ENCODE measurements at regions of chr13 and their contacts with region 1.

Region 1: DNA sequence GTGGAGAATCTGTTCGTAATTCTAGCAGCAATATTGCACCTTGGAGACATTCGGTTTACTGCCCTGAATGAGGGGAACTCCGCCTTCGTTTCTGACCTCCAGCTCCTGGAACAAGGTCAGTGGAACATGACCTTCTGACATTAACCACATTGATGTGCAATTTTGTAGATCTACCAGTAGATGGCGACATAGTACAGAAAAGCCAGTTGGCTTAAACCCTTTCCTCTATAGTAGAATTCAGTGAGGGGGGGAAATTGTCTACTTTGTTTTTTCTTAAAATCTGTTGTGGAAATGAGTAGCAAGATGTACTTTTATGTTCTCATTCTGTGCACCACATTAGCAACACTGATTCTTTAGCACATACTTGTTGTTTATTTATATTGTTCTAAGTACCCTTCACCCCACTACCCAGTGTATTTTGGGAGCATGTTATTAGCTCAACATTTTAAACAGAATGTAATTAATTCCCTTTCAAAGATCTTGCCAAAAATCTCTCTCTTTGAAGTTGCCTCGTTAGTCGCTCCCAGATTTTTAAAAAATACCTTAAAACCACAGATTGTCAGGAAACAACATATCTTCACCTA is 332.2 kb downstream of the MYO16 start:
- DNase-seq: no peak
- H3K4me3 Mint-ChIP-seq: no peak overlapping the region
- H3K27ac Mint-ChIP-seq: no peak overlapping the region
- H3K4me1 Mint-ChIP-seq: peaks cover 8% of the 10 kb centered on the region
- H3K27me3 Mint-ChIP-seq: no peaks in the 10 kb centered on the region
- CTCF ChIP-seq: peak; percentile 18

Region 2: GRCh38 chr13:108993346-108993745 is 31.7 kb after region 1 on chr13:
- CTCF ChIA-PET with region 1: no interaction called
- intact Hi-C with region 1: no loop called
- DNase-seq: no peak
- H3K4me3 Mint-ChIP-seq: no peak overlapping the region
- H3K27ac Mint-ChIP-seq: no peak overlapping the region
- H3K4me1 Mint-ChIP-seq: no peaks in the 10 kb centered on the region
- H3K27me3 Mint-ChIP-seq: no peaks in the 10 kb centered on the region
- CTCF ChIP-seq: no peak

Region 3: GRCh38 chr13:109131698-109132257 is 170.1 kb after region 1 on chr13:
- CTCF ChIA-PET with region 1: no interaction called
- intact Hi-C with region 1: loop called (anchors 10 kb)
- DNase-seq: no peak
- H3K4me3 Mint-ChIP-seq: no peak overlapping the region
- H3K27ac Mint-ChIP-seq: no peak overlapping the region
- H3K4me1 Mint-ChIP-seq: no peaks in the 10 kb centered on the region
- H3K27me3 Mint-ChIP-seq: no peaks in the 10 kb centered on the region
- CTCF ChIP-seq: no peak

Region 4: DNA sequence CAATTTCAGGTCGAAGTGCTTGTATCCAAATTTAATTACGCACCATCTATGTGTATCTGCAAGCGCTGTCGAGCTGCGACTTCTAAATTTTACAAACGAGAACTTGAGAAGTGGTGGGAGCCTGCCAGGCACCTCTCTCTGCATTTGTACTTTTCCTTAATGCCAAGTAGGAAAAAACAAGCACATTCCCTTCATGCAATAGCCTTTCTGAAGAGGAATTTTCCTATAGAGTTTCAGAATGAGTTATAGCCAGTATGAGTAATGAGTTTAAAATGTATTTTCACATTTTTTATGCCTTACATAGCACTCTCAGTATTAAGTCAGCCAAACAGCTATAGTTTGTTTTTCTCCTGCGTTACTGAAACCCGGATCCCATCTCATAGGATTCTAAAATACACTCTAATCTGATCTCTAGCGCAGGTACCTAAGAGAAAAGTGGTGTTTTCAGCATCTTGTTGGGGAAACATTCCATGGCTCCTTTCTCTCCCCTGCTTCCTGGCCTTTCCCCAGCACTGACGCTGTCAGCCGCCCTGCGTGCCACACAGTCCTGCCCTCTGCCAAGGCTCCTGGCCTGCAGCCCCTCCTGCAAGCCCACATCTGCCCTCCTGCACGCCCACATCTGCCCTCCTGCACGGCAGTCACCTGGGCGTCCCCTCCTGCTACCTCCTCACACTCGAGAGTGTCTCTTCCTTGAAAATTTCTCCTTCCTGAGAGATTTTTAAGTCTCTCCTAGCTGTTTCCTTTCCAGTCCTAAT is 194.7 kb after region 1 on chr13:
- CTCF ChIA-PET with region 1: no interaction called
- intact Hi-C with region 1: no loop called
- DNase-seq: no peak
- H3K4me3 Mint-ChIP-seq: peak overlapping the region; percentile 57
- H3K27ac Mint-ChIP-seq: peak overlapping the region; percentile 91
- H3K4me1 Mint-ChIP-seq: peaks cover 40% of the 10 kb centered on the region
- H3K27me3 Mint-ChIP-seq: no peaks in the 10 kb centered on the region
- CTCF ChIP-seq: no peak

Region 5: GRCh38 chr13:109778102-109778542 is 816.5 kb after region 1 on chr13:
- CTCF ChIA-PET with region 1: no interaction called
- intact Hi-C with region 1: loop called (anchors 5 kb)
- DNase-seq: no peak
- H3K4me3 Mint-ChIP-seq: peak overlapping the region; percentile 17
- H3K27ac Mint-ChIP-seq: no peak overlapping the region
- H3K4me1 Mint-ChIP-seq: peaks cover 17% of the 10 kb centered on the region
- H3K27me3 Mint-ChIP-seq: no peaks in the 10 kb centered on the region
- CTCF ChIP-seq: no peak

Region 6: DNA sequence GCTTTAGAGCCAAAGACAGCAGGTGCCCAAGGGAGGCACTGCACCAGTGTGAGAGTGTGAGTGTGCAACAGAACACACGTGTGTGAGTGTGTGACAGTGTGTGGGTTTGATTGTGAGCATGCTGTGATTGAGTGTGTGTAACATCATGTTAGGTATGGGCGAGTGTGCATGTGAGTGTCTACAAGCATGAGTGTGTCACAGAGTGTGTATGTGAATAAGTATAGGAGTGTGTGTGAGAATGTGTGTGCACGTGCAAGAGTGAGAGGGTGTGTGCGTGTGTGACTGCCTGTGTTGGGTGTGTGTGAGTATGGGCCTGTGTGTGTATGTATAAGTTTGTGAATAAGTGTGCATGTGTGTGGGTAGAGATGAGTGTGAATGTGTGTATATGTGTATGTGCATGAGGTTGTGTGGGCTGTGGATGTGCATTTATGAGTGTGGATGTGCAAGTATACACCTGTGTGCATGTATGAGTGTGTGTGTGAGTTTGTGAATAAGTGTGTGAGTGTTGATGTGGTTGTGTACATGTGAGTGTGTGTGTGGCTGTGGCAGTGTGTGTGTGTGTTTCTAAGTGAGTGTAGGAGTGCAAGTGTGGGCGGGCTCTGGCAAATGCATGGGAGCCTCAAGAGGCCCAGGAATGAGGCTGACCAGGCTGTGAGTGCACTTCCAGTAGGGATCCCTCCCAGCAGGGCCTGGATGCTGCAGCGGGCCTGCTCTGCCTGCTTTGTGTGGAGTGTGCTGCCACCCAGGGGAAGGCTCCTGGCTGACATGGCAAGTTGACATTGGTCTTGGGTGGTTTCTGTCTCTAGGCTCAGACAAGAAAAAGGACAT is 1146.9 kb after region 1 on chr13:
- CTCF ChIA-PET with region 1: no interaction called
- intact Hi-C with region 1: loop called (anchors 5 kb)
- DNase-seq: peak; percentile 60
- H3K4me3 Mint-ChIP-seq: no peak overlapping the region
- H3K27ac Mint-ChIP-seq: no peak overlapping the region
- H3K4me1 Mint-ChIP-seq: peaks cover 11% of the 10 kb centered on the region
- H3K27me3 Mint-ChIP-seq: no peaks in the 10 kb centered on the region
- CTCF ChIP-seq: no peak

Measured in Calu3 (cell line).